ENCODE measurements at regions of chr2 and their contacts with region 1.

Region 1: DNA sequence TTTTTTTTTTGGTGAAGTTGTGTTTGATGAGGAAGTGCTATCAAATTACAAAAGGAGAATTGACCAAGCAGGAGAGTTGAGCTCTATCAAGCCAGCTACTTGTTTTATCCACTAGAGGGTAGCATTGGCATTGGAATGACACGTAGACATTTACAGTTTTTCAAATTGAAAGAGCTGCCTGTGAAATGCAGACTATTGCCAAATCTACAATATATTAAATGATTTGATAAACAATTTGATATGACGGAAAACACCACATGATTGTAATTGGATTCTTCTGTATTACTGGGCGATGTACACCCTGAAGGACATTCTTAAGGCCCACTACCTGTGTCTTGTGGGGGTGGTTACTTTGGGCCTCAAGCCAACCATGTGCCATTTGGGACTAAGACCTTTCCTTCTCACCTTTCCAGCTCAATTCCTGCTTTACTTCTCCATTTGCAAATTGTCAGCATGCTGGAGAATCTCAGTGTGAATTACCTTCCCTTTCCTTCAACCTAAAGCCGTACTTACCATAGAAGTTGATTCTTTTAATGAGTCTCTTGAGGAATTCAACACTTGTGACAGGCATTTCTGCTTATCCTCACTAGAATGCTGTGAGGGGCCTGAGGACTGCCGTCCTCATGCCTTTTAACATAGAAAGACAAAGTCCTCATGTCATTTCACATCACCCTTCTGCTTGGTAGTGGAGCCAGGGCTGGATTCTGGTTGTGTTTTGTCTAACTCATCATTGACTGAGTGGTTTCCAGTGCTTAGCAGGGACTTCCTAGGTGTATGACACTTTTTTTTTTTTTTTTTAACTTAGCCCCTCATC is 134.8 kb upstream of the THUMPD2 start:
- DNase-seq: peak; percentile 53
- ATAC-seq: peak; percentile 36
- H3K4me3 ChIP-seq: no peak overlapping the region
- H3K4me3 Mint-ChIP-seq: no peak overlapping the region
- H3K27ac ChIP-seq: no peak overlapping the region
- H3K27ac Mint-ChIP-seq: no peak overlapping the region
- H3K4me1 ChIP-seq: no peaks in the 10 kb centered on the region
- H3K4me1 Mint-ChIP-seq: no peaks in the 10 kb centered on the region
- H3K27me3 ChIP-seq: no peaks in the 10 kb centered on the region
- H3K27me3 Mint-ChIP-seq: no peaks in the 10 kb centered on the region
- CTCF ChIP-seq: peak; percentile 85

Region 2: GRCh38 chr2:40016151-40016885 is 102.5 kb after region 1 on chr2:
- CTCF ChIA-PET with region 1: no interaction called
- POLR2A ChIA-PET with region 1: no interaction called
- intact Hi-C with region 1: no loop called
- DNase-seq: no peak
- ATAC-seq: no peak
- H3K4me3 ChIP-seq: no peak overlapping the region
- H3K4me3 Mint-ChIP-seq: no peak overlapping the region
- H3K27ac ChIP-seq: no peak overlapping the region
- H3K27ac Mint-ChIP-seq: no peak overlapping the region
- H3K4me1 ChIP-seq: no peaks in the 10 kb centered on the region
- H3K4me1 Mint-ChIP-seq: no peaks in the 10 kb centered on the region
- H3K27me3 ChIP-seq: no peaks in the 10 kb centered on the region
- H3K27me3 Mint-ChIP-seq: no peaks in the 10 kb centered on the region
- CTCF ChIP-seq: no peak

Region 3: GRCh38 chr2:40554668-40555285 is 640.9 kb after region 1 on chr2:
- CTCF ChIA-PET with region 1: interaction called, 74 read pairs
- POLR2A ChIA-PET with region 1: no interaction called
- intact Hi-C with region 1: no loop called
- DNase-seq: peak; percentile 37
- ATAC-seq: peak; percentile 39
- H3K4me3 ChIP-seq: no peak overlapping the region
- H3K4me3 Mint-ChIP-seq: no peak overlapping the region
- H3K27ac ChIP-seq: no peak overlapping the region
- H3K27ac Mint-ChIP-seq: no peak overlapping the region
- H3K4me1 ChIP-seq: no peaks in the 10 kb centered on the region
- H3K4me1 Mint-ChIP-seq: no peaks in the 10 kb centered on the region
- H3K27me3 ChIP-seq: no peaks in the 10 kb centered on the region
- H3K27me3 Mint-ChIP-seq: no peaks in the 10 kb centered on the region
- CTCF ChIP-seq: peak; percentile 83

Region 4: GRCh38 chr2:41698678-41699422 is 1785.0 kb after region 1 on chr2:
- CTCF ChIA-PET with region 1: interaction called, 26 read pairs
- POLR2A ChIA-PET with region 1: no interaction called
- intact Hi-C with region 1: loop called (anchors 2 kb)
- DNase-seq: peak; percentile 22
- ATAC-seq: no peak
- H3K4me3 ChIP-seq: no peak overlapping the region
- H3K4me3 Mint-ChIP-seq: no peak overlapping the region
- H3K27ac ChIP-seq: no peak overlapping the region
- H3K27ac Mint-ChIP-seq: no peak overlapping the region
- H3K4me1 ChIP-seq: no peaks in the 10 kb centered on the region
- H3K4me1 Mint-ChIP-seq: peaks cover 5% of the 10 kb centered on the region
- H3K27me3 ChIP-seq: no peaks in the 10 kb centered on the region
- H3K27me3 Mint-ChIP-seq: peaks cover 18% of the 10 kb centered on the region
- CTCF ChIP-seq: peak; percentile 43